AG04449 (cell line): ENCODE measurements at regions of chr3 and their contacts with region 1.

Region 1: DNA sequence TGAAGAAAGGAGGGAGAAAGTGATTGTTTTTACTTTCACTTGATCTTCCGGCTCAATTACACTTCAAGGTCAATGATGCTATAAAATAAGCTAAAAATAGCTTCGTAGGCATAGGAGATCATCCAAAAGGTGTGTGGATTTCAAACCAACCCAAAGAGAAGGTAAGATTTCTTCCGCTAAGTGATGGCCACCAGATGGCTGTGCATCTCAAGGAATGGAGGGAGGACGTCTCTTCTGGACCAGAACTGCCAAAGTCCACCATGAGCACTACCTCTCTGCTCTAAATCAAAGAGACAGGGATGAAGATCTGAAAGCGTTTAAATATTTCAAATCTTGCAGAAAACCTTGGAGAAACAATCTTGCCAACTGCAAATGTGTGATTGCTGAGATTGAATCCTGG is 199.1 kb upstream of the ZPLD1 start:
- DNase-seq: no peak
- H3K4me3 ChIP-seq: no peak overlapping the region
- CTCF ChIP-seq: peak; percentile 52

Region 2: GRCh38 chr3:102529452-102529851 is 293.8 kb after region 1 on chr3:
- CTCF ChIA-PET with region 1: interaction called, 214 read pairs
- POLR2A ChIA-PET with region 1: no interaction called
- DNase-seq: no peak
- H3K4me3 ChIP-seq: no peak overlapping the region
- CTCF ChIP-seq: no peak

Region 3: DNA sequence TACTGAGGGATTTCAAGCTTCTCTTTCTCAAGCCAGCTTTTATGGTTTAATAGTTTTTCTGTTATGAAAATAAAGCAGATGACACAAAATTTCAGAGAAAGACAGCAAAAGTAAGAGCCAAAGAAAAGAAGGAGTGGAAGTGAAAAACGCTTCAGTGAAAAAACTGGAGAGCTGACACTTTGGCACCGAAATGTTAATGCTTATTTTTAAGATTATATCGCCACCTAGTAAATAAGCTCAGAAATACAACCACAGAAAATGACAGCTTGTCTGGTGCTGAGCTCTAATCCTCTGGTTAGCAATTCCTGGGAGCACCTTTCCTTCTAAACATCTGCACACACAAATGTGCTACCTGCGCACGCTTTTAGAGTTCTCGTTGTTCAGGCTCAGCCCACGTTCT is 300.8 kb after region 1 on chr3:
- CTCF ChIA-PET with region 1: interaction called, 214 read pairs
- POLR2A ChIA-PET with region 1: no interaction called
- DNase-seq: no peak
- H3K4me3 ChIP-seq: no peak overlapping the region
- CTCF ChIP-seq: peak; percentile 19